ENCODE measurements at regions of chr19 and their contacts with region 1.

Region 1: DNA sequence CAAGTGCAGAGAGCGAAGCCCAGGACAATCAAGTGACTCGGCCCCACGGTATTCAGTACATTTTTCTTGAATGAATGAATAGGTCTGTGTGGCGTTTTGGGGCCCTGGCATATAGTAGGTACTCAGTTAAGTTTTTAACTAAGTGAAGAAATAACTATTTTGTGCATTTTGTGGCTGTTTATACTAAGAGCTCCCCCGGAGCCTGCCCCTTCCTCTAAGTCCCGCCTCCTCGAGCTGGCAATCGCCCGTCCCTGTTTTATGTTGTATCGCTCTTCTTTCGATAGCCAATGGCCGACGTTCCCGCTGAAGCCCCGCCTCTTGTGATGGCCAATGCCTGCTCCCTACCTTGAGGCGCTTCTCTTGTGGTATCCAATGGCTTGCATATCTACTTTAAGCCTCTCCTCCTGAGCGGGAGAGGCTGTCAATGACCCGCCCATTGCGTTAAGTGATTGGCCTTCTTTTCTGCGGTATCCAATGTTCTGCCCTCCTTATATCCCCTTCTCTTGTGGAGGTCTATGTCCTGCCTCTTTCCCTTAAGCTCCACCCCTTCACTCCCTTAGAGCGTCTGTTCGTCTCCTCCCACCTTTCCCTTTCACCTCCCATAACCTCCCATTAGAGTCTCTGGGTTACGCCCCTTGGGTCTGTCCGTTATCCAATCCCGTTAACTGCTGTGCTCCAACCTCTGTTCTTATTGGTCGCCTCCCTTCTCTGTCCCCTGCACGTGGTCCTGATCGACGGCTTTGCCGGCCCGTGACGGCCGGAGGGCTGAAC is 509 bp upstream of the HDGFL2 start:
- DNase-seq: peak; percentile 95 to 99 (median 98)
- H3K4me3 ChIP-seq: peak overlapping the region; percentile 61
- H3K4me3 Mint-ChIP-seq: no peak overlapping the region
- H3K27ac ChIP-seq: peak overlapping the region; percentile 71
- H3K27ac Mint-ChIP-seq: no peak overlapping the region
- H3K4me1 ChIP-seq: peaks cover 17% of the 10 kb centered on the region
- H3K4me1 Mint-ChIP-seq: peaks cover 15 to 25% (median 22%) of the 10 kb centered on the region in 3 donors
- H3K27me3 ChIP-seq: no peaks in the 10 kb centered on the region
- H3K27me3 Mint-ChIP-seq: no peaks in the 10 kb centered on the region

Region 2: DNA sequence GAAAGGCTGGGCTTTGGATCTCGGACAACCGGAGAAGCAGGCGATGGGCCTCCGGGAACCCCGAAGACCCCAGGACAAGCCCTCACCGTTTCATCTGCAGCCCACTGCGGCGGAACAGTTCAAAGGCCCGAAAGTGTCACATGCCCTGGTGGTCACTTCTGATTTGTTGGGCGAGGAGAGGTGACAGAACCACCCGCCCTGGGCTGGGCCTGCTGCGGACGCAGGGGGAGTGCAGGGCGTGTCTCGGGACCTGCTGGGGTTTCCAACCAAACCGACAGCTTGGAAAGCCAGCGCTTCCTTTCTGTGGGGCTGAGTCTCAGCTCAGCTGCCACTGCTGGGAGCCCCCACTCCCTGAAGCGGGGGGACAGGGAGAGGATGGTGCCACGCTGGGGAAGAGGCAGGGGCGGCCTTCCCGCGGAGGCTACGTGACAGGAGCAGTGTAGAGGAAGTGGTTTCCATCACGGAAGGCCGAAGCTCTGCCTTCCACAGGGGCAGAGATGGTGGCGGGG is 382.1 kb before region 1 on chr19:
- CTCF ChIA-PET with region 1: no interaction called
- POLR2A ChIA-PET with region 1: interaction called, 10 read pairs
- DNase-seq: peak; percentile 37 to 74 (median 52)
- H3K4me3 ChIP-seq: peak overlapping the region; percentile 49
- H3K4me3 Mint-ChIP-seq: peak overlapping the region; percentile 59 to 78 (median 72)
- H3K27ac ChIP-seq: peak overlapping the region; percentile 62
- H3K27ac Mint-ChIP-seq: peak overlapping the region; percentile 81 to 96 (median 94)
- H3K4me1 ChIP-seq: peaks cover 48% of the 10 kb centered on the region
- H3K4me1 Mint-ChIP-seq: peaks cover 35 to 52% (median 48%) of the 10 kb centered on the region in 3 donors
- H3K27me3 ChIP-seq: no peaks in the 10 kb centered on the region
- H3K27me3 Mint-ChIP-seq: no peaks in the 10 kb centered on the region

Region 3: DNA sequence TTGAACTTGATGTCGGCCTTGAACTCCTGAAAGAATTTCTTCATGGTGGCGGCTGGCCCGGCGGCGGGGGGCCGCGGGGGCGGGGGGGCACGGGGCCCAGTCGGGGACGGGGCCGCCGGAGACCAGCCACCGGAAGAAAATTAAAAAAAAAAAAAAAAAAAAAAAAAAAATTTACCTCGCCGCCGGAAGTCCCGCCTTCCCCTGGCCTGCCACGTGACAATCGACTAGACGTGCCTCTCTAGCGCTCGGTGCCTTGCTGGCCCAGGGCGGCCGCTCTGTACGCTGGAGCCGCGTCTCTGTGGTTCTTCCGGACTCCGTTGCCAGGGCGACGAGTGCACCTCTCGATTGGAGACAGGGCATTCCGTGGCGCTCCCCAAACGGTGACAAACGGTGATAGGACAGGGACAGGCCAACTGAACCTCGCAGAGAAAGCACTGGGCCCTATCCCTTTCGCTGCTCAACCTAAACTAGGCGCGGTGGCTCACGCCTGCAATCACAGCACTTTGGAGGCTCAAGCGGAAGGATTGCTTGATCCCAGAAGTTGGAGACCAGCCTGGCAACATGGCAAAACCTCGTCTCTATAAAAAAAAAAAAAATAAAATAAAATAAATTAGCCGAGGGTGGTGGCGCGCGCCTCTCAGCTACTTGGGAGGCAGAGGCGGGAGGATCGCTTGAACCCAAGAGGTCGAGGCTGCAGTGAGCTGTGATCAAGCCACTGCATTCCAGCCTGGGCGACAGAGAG is 13.8 kb before region 1 on chr19 and contains the start of gene UBXN6:
- CTCF ChIA-PET with region 1: interaction called, 5 read pairs
- POLR2A ChIA-PET with region 1: interaction called, 13 read pairs
- DNase-seq: peak; percentile 96 to 99 (median 97)
- H3K4me3 ChIP-seq: peak within 1 kb of the TSS; percentile 66
- H3K4me3 Mint-ChIP-seq: peak within 1 kb of the TSS; percentile 85 to 94 (median 92)
- H3K27ac ChIP-seq: peak within 1 kb of the TSS; percentile 73
- H3K27ac Mint-ChIP-seq: peak within 1 kb of the TSS; percentile 81 to 97 (median 96)
- H3K4me1 ChIP-seq: peaks cover 17% of the 10 kb centered on the region
- H3K4me1 Mint-ChIP-seq: peaks cover 18 to 30% (median 19%) of the 10 kb centered on the region in 3 donors
- H3K27me3 ChIP-seq: no peaks in the 10 kb centered on the region
- H3K27me3 Mint-ChIP-seq: peaks cover 0 to 1% of the 10 kb centered on the region in 2 donors
- total RNA-seq, gene UBXN6: 56.6 to 60.0 TPM

Region 4: DNA sequence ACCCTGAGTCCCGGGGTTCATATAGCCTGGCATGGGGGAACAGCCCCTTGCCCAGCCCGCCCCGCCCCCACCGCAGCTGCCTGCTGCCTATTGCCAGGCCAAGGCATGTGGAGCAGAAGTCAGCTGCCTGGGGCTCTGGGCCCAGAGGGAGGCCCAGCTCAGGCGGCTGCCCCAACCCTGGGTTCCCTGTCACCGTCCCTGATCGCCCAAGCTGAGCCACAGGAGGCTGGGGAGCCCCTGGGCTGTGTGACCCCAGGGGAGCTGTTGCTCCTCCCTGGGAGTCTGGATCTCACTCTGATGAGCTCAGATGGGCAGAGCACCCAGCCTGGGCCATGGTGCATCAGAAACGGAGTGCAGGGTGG is 45.3 kb after region 1 on chr19:
- CTCF ChIA-PET with region 1: no interaction called
- POLR2A ChIA-PET with region 1: no interaction called
- DNase-seq: no peak
- H3K4me3 ChIP-seq: no peak overlapping the region
- H3K4me3 Mint-ChIP-seq: no peak overlapping the region
- H3K27ac ChIP-seq: no peak overlapping the region
- H3K27ac Mint-ChIP-seq: no peak overlapping the region
- H3K4me1 ChIP-seq: no peaks in the 10 kb centered on the region
- H3K4me1 Mint-ChIP-seq: no peaks in the 10 kb centered on the region
- H3K27me3 ChIP-seq: no peaks in the 10 kb centered on the region
- H3K27me3 Mint-ChIP-seq: peaks cover 6 to 8% of the 10 kb centered on the region in 2 donors